A673 (cell line): ENCODE measurements at regions of chr2 and their contacts with region 1.

Region 1: GRCh38 chr2:3303583-3304406 is 73.8 kb downstream of the EIPR1 start:
- DNase-seq: peak; percentile 92
- H3K4me3 ChIP-seq: peak overlapping the region; percentile 31
- H3K27ac ChIP-seq: peak overlapping the region; percentile 78
- H3K4me1 ChIP-seq: peaks cover 19% of the 10 kb centered on the region
- H3K27me3 ChIP-seq: no peaks in the 10 kb centered on the region
- CTCF ChIP-seq: peak; percentile 97

Region 2: DNA sequence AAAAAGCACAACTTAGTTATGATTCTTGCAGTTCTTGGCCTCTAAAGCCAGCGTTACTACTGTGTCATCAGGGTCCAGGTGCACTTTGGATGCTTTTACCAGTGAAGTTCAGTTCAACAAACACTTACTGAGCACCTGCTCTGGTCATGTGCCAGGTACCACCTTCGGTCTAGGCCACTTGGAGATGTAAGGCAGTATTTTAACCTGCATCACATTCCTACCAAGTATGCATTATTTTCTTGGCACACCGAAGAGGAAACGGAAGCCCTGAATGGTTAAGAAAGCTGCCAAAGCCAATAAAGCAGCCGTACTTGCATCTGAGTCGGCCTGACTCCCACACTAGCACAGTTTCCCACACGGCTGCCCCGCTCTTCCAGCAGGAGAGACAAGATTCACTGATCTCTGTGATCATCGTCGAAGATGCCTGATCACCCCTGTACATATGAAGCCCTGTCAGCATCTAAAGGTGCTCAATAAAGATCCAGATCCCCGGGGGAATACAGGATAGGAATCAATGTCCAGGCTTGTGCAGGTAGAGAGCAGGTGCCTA is 353.3 kb before region 1 on chr2:
- CTCF ChIA-PET with region 1: interaction called, 10 read pairs
- POLR2A ChIA-PET with region 1: no interaction called
- intact Hi-C with region 1: no loop called
- DNase-seq: no peak
- H3K4me3 ChIP-seq: no peak overlapping the region
- H3K27ac ChIP-seq: no peak overlapping the region
- H3K4me1 ChIP-seq: no peaks in the 10 kb centered on the region
- H3K27me3 ChIP-seq: no peaks in the 10 kb centered on the region
- CTCF ChIP-seq: no peak

Region 3: GRCh38 chr2:3001615-3002560 is 301.9 kb before region 1 on chr2:
- CTCF ChIA-PET with region 1: interaction called, 3 read pairs
- POLR2A ChIA-PET with region 1: no interaction called
- intact Hi-C with region 1: loop called (anchors 2 kb)
- DNase-seq: peak; percentile 89
- H3K4me3 ChIP-seq: no peak overlapping the region
- H3K27ac ChIP-seq: no peak overlapping the region
- H3K4me1 ChIP-seq: peaks cover 20% of the 10 kb centered on the region
- H3K27me3 ChIP-seq: no peaks in the 10 kb centered on the region
- CTCF ChIP-seq: peak; percentile 65

Region 4: GRCh38 chr2:3179208-3179607 is 124.6 kb before region 1 on chr2:
- CTCF ChIA-PET with region 1: no interaction called
- POLR2A ChIA-PET with region 1: no interaction called
- intact Hi-C with region 1: loop called (anchors 1 kb)
- DNase-seq: peak; percentile 51
- H3K4me3 ChIP-seq: no peak overlapping the region
- H3K27ac ChIP-seq: no peak overlapping the region
- H3K4me1 ChIP-seq: peaks cover 9% of the 10 kb centered on the region
- H3K27me3 ChIP-seq: no peaks in the 10 kb centered on the region
- CTCF ChIP-seq: peak; percentile 71

Region 5: DNA sequence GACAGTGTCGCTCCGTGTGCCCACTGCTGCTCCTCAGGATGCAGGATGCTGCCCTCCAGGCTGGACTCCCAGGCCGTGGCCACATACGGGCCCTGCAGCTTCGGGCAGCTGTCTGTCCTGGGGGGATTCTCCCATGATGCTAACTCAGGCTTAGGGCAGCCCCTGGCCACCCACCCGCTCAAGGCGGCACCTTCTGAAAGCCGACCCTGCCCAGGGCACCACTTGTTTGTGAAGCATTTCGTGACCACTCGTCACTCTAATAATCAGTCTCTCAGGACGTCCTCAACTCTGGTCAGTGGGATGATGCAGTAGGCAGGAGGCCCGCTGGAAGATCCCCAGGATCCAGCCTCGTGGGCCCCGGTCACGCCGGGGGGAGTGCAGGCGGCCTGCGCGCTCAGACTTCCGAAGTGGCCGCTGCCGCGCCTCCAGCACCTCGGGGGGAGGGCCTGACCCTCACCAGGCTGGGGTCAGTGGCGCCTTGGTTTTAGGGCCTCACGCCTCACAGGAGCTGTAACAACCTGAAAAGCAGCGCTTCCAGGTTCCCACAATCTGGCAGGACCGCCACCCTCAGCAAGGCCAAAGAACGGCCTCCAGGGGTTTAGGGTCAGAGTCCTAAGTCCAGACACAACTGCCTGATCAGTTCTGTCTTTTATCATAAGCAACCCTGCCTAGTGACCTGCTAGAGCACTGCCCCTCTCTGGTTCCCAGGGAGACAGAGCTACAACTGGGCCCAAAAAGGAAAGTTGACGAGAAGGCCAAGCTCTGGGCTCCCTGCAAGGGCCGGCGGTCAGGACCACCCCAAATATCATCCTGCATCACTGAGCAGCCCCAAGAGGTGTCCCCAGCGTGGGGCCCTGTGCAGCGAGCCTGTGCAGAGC is 20.8 kb after region 1 on chr2:
- CTCF ChIA-PET with region 1: no interaction called
- POLR2A ChIA-PET with region 1: no interaction called
- intact Hi-C with region 1: no loop called
- DNase-seq: no peak
- H3K4me3 ChIP-seq: no peak overlapping the region
- H3K27ac ChIP-seq: no peak overlapping the region
- H3K4me1 ChIP-seq: no peaks in the 10 kb centered on the region
- H3K27me3 ChIP-seq: no peaks in the 10 kb centered on the region
- CTCF ChIP-seq: no peak